Activated CD4-positive, alpha-beta memory T cell treated with anti-CD3 and anti-CD28 coated beads, Interleukin-2, amount 10 ng/mL, durations not matched to agents 7 days and 5 days (primary cell): ENCODE measurements at regions of chr17 and their contacts with region 1.

Region 1: GRCh38 chr17:38982858-38983746 is 15.9 kb upstream of the FBXO47 start:
- DNase-seq: peak; percentile 40
- H3K4me3 Mint-ChIP-seq: no peak overlapping the region
- H3K27ac Mint-ChIP-seq: no peak overlapping the region
- H3K4me1 Mint-ChIP-seq: peaks cover 2% of the 10 kb centered on the region
- H3K27me3 Mint-ChIP-seq: peaks cover 4% of the 10 kb centered on the region

Region 2: DNA sequence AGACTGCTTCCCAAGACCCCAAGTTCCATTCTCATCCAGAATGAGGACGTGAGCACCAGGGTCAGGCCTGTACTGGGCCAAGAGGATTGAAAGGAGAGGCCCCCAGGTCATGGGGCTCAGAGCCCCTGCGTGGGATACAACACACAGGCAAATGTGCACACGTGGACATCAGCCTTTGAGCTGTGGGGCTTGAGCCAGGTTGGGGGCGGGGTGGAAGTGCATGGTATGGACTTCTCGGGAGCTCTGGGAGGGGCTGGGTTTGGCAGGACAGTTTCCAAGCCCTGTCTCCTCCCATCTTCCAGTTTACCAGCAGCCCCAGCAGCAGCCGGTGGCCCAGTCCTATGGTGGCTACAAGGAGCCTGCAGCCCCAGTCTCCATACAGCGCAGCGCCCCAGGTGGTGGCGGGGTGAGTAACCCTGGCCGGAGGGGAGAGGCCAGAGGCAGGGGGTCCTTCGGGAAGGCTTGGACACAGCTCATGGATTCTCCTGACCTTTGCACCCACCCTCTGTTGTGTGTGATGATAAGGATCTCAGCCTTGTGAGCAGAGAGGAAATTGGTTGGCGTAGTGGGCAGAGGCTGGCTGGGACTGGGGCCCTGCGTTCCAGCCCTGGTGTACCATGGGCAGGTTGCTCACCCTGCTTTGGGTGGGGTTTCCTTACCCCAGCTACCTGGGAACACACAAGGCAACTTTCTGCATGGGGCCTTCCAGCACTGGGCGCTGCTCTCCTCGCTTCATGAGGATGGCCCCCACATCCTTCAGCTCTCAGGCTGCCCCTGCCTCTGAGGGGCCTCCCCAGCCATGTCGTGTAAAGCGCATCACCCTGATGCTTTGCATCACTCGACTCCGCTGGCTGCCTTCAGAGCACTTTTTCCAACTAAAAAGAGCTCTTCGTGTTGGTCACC is 68.1 kb before region 1 on chr17:
- CTCF ChIA-PET with region 1: no interaction called
- POLR2A ChIA-PET with region 1: no interaction called
- DNase-seq: peak; percentile 14
- H3K4me3 Mint-ChIP-seq: no peak overlapping the region
- H3K27ac Mint-ChIP-seq: no peak overlapping the region
- H3K4me1 Mint-ChIP-seq: peaks cover 18% of the 10 kb centered on the region
- H3K27me3 Mint-ChIP-seq: no peaks in the 10 kb centered on the region

Region 3: DNA sequence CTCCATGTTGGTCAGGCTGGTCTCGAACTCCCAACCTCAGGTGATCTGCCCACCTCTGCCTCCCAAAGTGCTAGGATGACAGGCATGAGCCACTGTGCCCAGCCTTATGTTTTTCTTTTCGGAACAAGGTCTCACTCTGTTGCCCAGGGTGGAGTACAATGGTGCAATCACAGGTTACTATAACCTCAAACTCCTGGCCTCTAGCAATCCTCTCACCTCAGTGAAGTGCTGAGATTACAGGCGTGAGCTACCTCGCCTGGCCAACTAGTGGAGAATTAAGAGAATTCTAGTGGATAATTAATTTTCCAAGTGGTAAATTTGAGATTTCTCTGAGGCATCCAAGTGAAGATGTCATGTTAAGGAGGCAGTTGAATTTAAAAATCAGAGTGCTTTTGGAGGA is 13.0 kb before region 1 on chr17:
- CTCF ChIA-PET with region 1: interaction called, 12 read pairs
- POLR2A ChIA-PET with region 1: no interaction called
- DNase-seq: no peak
- H3K4me3 Mint-ChIP-seq: no peak overlapping the region
- H3K27ac Mint-ChIP-seq: no peak overlapping the region
- H3K4me1 Mint-ChIP-seq: peaks cover 15% of the 10 kb centered on the region
- H3K27me3 Mint-ChIP-seq: peaks cover 2% of the 10 kb centered on the region

Region 4: DNA sequence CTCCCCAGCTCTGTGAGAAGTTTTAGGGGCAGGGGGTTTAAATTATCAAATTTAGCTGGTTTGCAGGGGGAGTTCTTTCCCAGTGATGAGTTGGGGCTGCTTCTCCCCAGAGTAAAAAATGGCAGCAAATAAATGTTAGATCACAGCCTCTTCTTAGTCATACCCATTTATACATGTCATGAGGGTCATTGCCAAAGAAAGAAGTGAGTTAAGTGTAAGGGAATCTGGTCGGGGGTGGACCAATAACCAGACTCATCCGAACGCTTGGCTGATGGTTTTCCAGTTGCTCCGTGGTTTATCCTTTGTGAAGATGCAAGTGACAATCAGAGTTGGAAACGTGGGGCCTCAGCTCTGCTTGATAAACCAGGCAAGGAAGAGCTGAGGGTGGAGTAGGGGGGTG is 81.3 kb after region 1 on chr17:
- CTCF ChIA-PET with region 1: interaction called, 11 read pairs
- POLR2A ChIA-PET with region 1: no interaction called
- DNase-seq: no peak
- H3K4me3 Mint-ChIP-seq: no peak overlapping the region
- H3K27ac Mint-ChIP-seq: no peak overlapping the region
- H3K4me1 Mint-ChIP-seq: peaks cover 4% of the 10 kb centered on the region
- H3K27me3 Mint-ChIP-seq: no peaks in the 10 kb centered on the region

Region 5: GRCh38 chr17:39153599-39154051 is 170.5 kb after region 1 on chr17:
- CTCF ChIA-PET with region 1: interaction called, 229 read pairs
- POLR2A ChIA-PET with region 1: interaction called, 18 read pairs
- DNase-seq: peak; percentile 93
- H3K4me3 Mint-ChIP-seq: peak overlapping the region; percentile 97
- H3K27ac Mint-ChIP-seq: peak overlapping the region; percentile 83
- H3K4me1 Mint-ChIP-seq: peaks cover 31% of the 10 kb centered on the region
- H3K27me3 Mint-ChIP-seq: peaks cover 34% of the 10 kb centered on the region

Region 6: GRCh38 chr17:39174907-39175694 is 192.0 kb after region 1 on chr17:
- CTCF ChIA-PET with region 1: interaction called, 42 read pairs
- POLR2A ChIA-PET with region 1: no interaction called
- DNase-seq: peak; percentile 75
- H3K4me3 Mint-ChIP-seq: no peak overlapping the region
- H3K27ac Mint-ChIP-seq: no peak overlapping the region
- H3K4me1 Mint-ChIP-seq: peaks cover 8% of the 10 kb centered on the region
- H3K27me3 Mint-ChIP-seq: no peaks in the 10 kb centered on the region

Region 7: GRCh38 chr17:39244600-39245570 is 261.8 kb after region 1 on chr17:
- CTCF ChIA-PET with region 1: interaction called, 39 read pairs
- POLR2A ChIA-PET with region 1: interaction called, 3 read pairs
- DNase-seq: peak; percentile 89
- H3K4me3 Mint-ChIP-seq: no peak overlapping the region
- H3K27ac Mint-ChIP-seq: no peak overlapping the region
- H3K4me1 Mint-ChIP-seq: peaks cover 15% of the 10 kb centered on the region
- H3K27me3 Mint-ChIP-seq: no peaks in the 10 kb centered on the region